ENCODE measurements at regions of chr7 and their contacts with region 1.

Region 1: GRCh38 chr7:104848138-104848990 is 165.6 kb upstream of the KMT2E start:
- DNase-seq: peak; percentile 35
- ATAC-seq: peak; percentile 83
- H3K4me3 ChIP-seq: no peak overlapping the region
- H3K27ac ChIP-seq: no peak overlapping the region
- H3K4me1 ChIP-seq: no peaks in the 10 kb centered on the region
- H3K27me3 ChIP-seq: peaks cover 0 to 20% of the 10 kb centered on the region in 2 experiments; a peak in 1 of 5 replicates
- CTCF ChIP-seq: peak; percentile 86
- EP300 ChIP-seq: no peak
- POLR2A ChIP-seq: no peak
- RAD21 ChIP-seq: peak; percentile 46

Region 2: GRCh38 chr7:104231054-104232046 is 617.0 kb before region 1 on chr7:
- CTCF ChIA-PET with region 1: interaction called, 8 read pairs
- POLR2A ChIA-PET with region 1: no interaction called
- in situ Hi-C with region 1: loop called (anchors 10 kb)
- intact Hi-C with region 1: loop called (anchors 2 kb)
- DNase-seq: peak; percentile 47
- ATAC-seq: peak; percentile 98
- H3K4me3 ChIP-seq: no peak overlapping the region
- H3K27ac ChIP-seq: no peak overlapping the region
- H3K4me1 ChIP-seq: no peaks in the 10 kb centered on the region
- H3K27me3 ChIP-seq: no peaks in the 10 kb centered on the region
- CTCF ChIP-seq: peak; percentile 89
- EP300 ChIP-seq: no peak
- POLR2A ChIP-seq: no peak
- RAD21 ChIP-seq: peak; percentile 61

Region 3: GRCh38 chr7:104272767-104273384 is 575.5 kb before region 1 on chr7:
- CTCF ChIA-PET with region 1: no interaction called
- POLR2A ChIA-PET with region 1: no interaction called
- in situ Hi-C with region 1: no loop called
- intact Hi-C with region 1: loop called (anchors 5 kb)
- DNase-seq: peak; percentile 36
- ATAC-seq: peak; percentile 40; the same call in 2 of the 3 replicates
- H3K4me3 ChIP-seq: no peak overlapping the region
- H3K27ac ChIP-seq: no peak overlapping the region
- H3K4me1 ChIP-seq: peaks cover 5% of the 10 kb centered on the region; the same call in 1 of the 2 replicates
- H3K27me3 ChIP-seq: no peaks in the 10 kb centered on the region
- CTCF ChIP-seq: peak; percentile 60
- EP300 ChIP-seq: no peak
- POLR2A ChIP-seq: no peak
- RAD21 ChIP-seq: no peak

Region 4: GRCh38 chr7:104341546-104341945 is 506.8 kb before region 1 on chr7:
- CTCF ChIA-PET with region 1: no interaction called
- POLR2A ChIA-PET with region 1: no interaction called
- in situ Hi-C with region 1: loop called (anchors 25 kb)
- intact Hi-C with region 1: no loop called
- DNase-seq: peak; percentile 25
- ATAC-seq: peak; percentile 86
- H3K4me3 ChIP-seq: no peak overlapping the region
- H3K27ac ChIP-seq: no peak overlapping the region
- H3K4me1 ChIP-seq: no peaks in the 10 kb centered on the region
- H3K27me3 ChIP-seq: no peaks in the 10 kb centered on the region
- CTCF ChIP-seq: peak; percentile 61
- EP300 ChIP-seq: no peak
- POLR2A ChIP-seq: no peak
- RAD21 ChIP-seq: peak; percentile 23; the same call in 1 of the 2 replicates

Region 5: GRCh38 chr7:104643587-104644217 is 204.7 kb before region 1 on chr7:
- CTCF ChIA-PET with region 1: interaction called, 9 read pairs
- POLR2A ChIA-PET with region 1: no interaction called
- in situ Hi-C with region 1: loop called (anchors 5 kb)
- intact Hi-C with region 1: no loop called
- DNase-seq: peak; percentile 7
- ATAC-seq: peak; percentile 31; the same call in 1 of the 3 replicates
- H3K4me3 ChIP-seq: no peak overlapping the region
- H3K27ac ChIP-seq: no peak overlapping the region
- H3K4me1 ChIP-seq: no peaks in the 10 kb centered on the region
- H3K27me3 ChIP-seq: peaks cover 0 to 7% of the 10 kb centered on the region in 2 experiments; a peak in 2 of 5 replicates
- CTCF ChIP-seq: peak; percentile 45
- EP300 ChIP-seq: no peak
- POLR2A ChIP-seq: no peak
- RAD21 ChIP-seq: 0 out of 2 replicates have a peak, but pooled peaks have one; percentile 21

Measured in HepG2 (cell line).